Posterior cingulate gyrus (tissue), 11 donors: ENCODE measurements at regions of chr12 and their contacts with region 1.

Region 1: GRCh38 chr12:107131832-107132616 is 38.7 kb upstream of the CRY1 start:
- DNase-seq: peak in 1 of 10 donors; percentile 7

Region 2: GRCh38 chr12:107402041-107403022 is 270.3 kb after region 1 on chr12:
- intact Hi-C with region 1: loop called (anchors 5 kb)
- DNase-seq: peak in 6 of 10 donors; percentile 21 to 84 (median 29)

Region 3: DNA sequence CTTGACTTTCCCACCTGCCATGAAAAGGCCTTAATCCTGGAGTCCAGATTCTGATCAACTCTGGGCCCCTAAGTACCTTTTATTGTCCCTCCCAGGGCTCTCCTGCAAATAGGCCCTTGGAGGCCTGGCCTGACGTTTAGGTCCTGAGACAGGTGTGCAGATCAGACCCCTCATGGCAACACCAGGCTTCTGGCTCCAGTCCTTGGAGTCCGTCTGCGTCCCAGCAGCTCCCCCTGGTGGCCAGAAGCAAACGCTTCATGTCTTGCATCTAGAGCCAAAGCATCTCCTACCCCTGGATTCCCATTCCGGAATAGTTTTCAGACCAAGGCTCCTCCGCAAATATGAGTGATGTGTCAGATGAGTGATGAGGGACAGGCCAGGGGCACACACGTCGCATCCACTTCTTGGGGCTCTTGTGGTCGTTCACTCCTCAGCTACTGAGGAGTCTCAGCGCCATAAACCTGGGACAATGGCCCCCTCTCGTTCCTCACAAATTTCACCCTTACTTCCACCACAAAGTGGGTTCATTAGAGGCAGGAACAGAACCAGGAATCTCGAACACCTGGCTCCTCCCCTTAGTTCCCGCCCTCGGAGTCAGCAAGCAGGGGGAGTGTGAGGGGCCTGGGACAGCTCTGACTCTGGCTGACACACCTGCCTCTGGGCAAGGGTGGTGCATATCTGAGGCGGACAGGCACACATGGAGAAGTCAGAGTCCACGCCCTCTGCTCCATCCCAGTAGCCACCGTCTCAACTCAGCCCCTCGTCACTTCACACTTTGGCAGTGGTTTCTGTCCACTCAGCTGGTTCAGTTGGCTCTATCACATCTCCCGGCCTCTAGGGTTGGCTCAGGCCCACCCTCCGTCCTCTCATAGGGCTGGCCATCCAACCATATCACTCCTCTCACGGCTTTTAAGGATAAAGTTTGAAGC is 475.7 kb after region 1 on chr12:
- intact Hi-C with region 1: loop called (anchors 1 kb)
- DNase-seq: peak; percentile 68 to 98 (median 87)